CD8-positive, alpha-beta T cell (primary cell): ENCODE measurements at regions of chr5 and their contacts with region 1.

Region 1: DNA sequence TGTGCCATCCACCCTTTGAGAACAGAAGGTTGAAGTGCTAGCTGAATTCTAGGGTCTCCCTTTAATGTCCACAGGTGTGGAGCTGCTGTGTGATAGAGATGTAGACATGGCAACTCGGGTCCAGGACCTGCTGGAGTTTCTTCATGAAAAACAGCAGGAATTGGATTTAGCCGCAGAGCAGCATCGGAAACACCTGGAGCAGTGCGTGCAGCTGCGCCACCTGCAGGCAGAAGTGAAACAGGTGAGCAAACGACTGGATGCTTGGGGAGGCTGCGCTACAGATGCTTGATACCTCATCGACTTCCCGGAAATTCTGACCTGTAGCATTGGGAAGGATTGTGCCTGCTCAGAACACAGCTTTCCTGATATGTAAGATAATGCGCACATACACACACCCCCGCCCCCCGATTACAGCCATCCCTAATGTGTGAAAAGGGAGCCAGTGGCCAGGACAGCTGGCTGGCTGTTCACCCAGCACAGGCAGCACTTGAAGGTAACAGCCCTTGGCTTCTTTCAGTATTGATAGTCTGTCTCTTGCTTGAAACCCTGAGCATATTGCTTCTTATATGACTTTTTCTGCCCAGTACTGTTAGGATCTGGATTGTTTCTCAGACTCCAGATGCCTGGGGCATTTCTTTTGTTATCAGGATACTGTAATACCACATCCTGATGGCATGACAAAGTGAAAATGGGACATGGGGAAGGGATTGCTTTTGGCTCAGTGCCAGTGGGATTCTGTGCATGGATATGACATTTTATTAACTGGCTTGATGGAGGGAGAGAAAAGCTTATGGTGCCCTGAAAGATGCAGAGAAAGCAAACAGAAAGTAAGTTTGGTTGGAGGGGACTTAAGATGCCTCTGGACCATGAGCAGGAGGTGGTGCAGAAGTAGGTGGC is 216.8 kb upstream of the OTULINL start:
- DNase-seq: peak in 3 of 9 experiments; percentile 12 to 34 (median 25)
- ATAC-seq: no peak
- H3K4me3 ChIP-seq: no peak overlapping the region
- H3K4me3 Mint-ChIP-seq: no peak overlapping the region
- H3K27ac ChIP-seq: no peak overlapping the region
- H3K27ac Mint-ChIP-seq: no peak overlapping the region
- H3K4me1 ChIP-seq: peaks cover 33% of the 10 kb centered on the region
- H3K4me1 Mint-ChIP-seq: peaks cover 42% of the 10 kb centered on the region
- H3K27me3 ChIP-seq: no peaks in the 10 kb centered on the region
- H3K27me3 Mint-ChIP-seq: no peaks in the 10 kb centered on the region
- CTCF ChIP-seq: peak; percentile 6

Region 2: GRCh38 chr5:14351845-14352712 is 12.7 kb before region 1 on chr5:
- CTCF ChIA-PET with region 1: interaction called, 15 read pairs
- POLR2A ChIA-PET with region 1: no interaction called
- intact Hi-C with region 1: no loop called
- DNase-seq: peak; percentile 26 to 76 (median 59)
- ATAC-seq: peak; percentile 95
- H3K4me3 ChIP-seq: no peak overlapping the region
- H3K4me3 Mint-ChIP-seq: no peak overlapping the region
- H3K27ac ChIP-seq: no peak overlapping the region
- H3K27ac Mint-ChIP-seq: no peak overlapping the region
- H3K4me1 ChIP-seq: no peaks in the 10 kb centered on the region
- H3K4me1 Mint-ChIP-seq: no peaks in the 10 kb centered on the region
- H3K27me3 ChIP-seq: no peaks in the 10 kb centered on the region
- H3K27me3 Mint-ChIP-seq: peaks cover 3% of the 10 kb centered on the region
- CTCF ChIP-seq: peak; percentile 87

Region 3: GRCh38 chr5:14399054-14399692 is 34.3 kb after region 1 on chr5:
- CTCF ChIA-PET with region 1: interaction called, 19 read pairs
- POLR2A ChIA-PET with region 1: no interaction called
- intact Hi-C with region 1: loop called in 1 of 2 experiments (anchors 2 kb)
- DNase-seq: peak in 3 of 9 experiments; percentile 37 to 72 (median 58)
- ATAC-seq: peak; percentile 65
- H3K4me3 ChIP-seq: no peak overlapping the region
- H3K4me3 Mint-ChIP-seq: no peak overlapping the region
- H3K27ac ChIP-seq: no peak overlapping the region
- H3K27ac Mint-ChIP-seq: no peak overlapping the region
- H3K4me1 ChIP-seq: no peaks in the 10 kb centered on the region
- H3K4me1 Mint-ChIP-seq: peaks cover 13% of the 10 kb centered on the region
- H3K27me3 ChIP-seq: no peaks in the 10 kb centered on the region
- H3K27me3 Mint-ChIP-seq: no peaks in the 10 kb centered on the region
- CTCF ChIP-seq: peak; percentile 71

Region 4: GRCh38 chr5:14650052-14650451 is 285.2 kb after region 1 on chr5:
- CTCF ChIA-PET with region 1: interaction called, 283 read pairs
- POLR2A ChIA-PET with region 1: interaction called, 4 read pairs
- intact Hi-C with region 1: loop called (anchors 1 kb)
- DNase-seq: no peak
- ATAC-seq: no peak
- H3K4me3 ChIP-seq: no peak overlapping the region
- H3K4me3 Mint-ChIP-seq: no peak overlapping the region
- H3K27ac ChIP-seq: no peak overlapping the region
- H3K27ac Mint-ChIP-seq: no peak overlapping the region
- H3K4me1 ChIP-seq: peaks cover 4% of the 10 kb centered on the region
- H3K4me1 Mint-ChIP-seq: peaks cover under 1% of the 10 kb centered on the region
- H3K27me3 ChIP-seq: no peaks in the 10 kb centered on the region
- H3K27me3 Mint-ChIP-seq: peaks cover 7% of the 10 kb centered on the region
- CTCF ChIP-seq: no peak

Region 5: GRCh38 chr5:14655146-14655741 is 290.4 kb after region 1 on chr5:
- CTCF ChIA-PET with region 1: interaction called, 283 read pairs
- POLR2A ChIA-PET with region 1: interaction called, 4 read pairs
- intact Hi-C with region 1: no loop called
- DNase-seq: no peak
- ATAC-seq: peak; percentile 26
- H3K4me3 ChIP-seq: no peak overlapping the region
- H3K4me3 Mint-ChIP-seq: no peak overlapping the region
- H3K27ac ChIP-seq: no peak overlapping the region
- H3K27ac Mint-ChIP-seq: no peak overlapping the region
- H3K4me1 ChIP-seq: no peaks in the 10 kb centered on the region
- H3K4me1 Mint-ChIP-seq: peaks cover 14% of the 10 kb centered on the region
- H3K27me3 ChIP-seq: no peaks in the 10 kb centered on the region
- H3K27me3 Mint-ChIP-seq: no peaks in the 10 kb centered on the region
- CTCF ChIP-seq: no peak

Region 6: DNA sequence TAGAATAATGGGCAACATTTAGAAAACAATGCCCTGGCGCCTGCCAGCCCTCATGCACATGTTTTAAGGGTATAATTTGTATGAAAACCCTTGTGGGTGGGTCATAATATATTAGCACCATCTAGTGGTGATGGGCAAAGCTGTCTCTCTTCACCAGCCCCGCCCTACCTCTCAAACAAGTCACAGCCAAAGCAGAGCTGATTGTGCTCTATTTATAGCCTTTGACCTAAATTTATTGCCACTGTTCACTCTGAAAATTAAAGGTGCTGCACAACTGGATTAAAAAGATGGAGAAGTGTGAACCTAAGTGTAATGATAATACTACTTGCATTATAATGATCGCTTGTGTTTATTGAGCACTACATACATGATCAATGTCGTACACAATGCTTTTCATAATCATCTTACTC is 638.7 kb after region 1 on chr5:
- CTCF ChIA-PET with region 1: no interaction called
- POLR2A ChIA-PET with region 1: no interaction called
- intact Hi-C with region 1: loop called in 1 of 2 experiments (anchors 5 kb)
- DNase-seq: peak; percentile 24 to 82 (median 53)
- ATAC-seq: peak; percentile 99
- H3K4me3 ChIP-seq: no peak overlapping the region
- H3K4me3 Mint-ChIP-seq: no peak overlapping the region
- H3K27ac ChIP-seq: no peak overlapping the region
- H3K27ac Mint-ChIP-seq: no peak overlapping the region
- H3K4me1 ChIP-seq: no peaks in the 10 kb centered on the region
- H3K4me1 Mint-ChIP-seq: no peaks in the 10 kb centered on the region
- H3K27me3 ChIP-seq: no peaks in the 10 kb centered on the region
- H3K27me3 Mint-ChIP-seq: peaks cover 5% of the 10 kb centered on the region
- CTCF ChIP-seq: peak; percentile 78

Region 7: DNA sequence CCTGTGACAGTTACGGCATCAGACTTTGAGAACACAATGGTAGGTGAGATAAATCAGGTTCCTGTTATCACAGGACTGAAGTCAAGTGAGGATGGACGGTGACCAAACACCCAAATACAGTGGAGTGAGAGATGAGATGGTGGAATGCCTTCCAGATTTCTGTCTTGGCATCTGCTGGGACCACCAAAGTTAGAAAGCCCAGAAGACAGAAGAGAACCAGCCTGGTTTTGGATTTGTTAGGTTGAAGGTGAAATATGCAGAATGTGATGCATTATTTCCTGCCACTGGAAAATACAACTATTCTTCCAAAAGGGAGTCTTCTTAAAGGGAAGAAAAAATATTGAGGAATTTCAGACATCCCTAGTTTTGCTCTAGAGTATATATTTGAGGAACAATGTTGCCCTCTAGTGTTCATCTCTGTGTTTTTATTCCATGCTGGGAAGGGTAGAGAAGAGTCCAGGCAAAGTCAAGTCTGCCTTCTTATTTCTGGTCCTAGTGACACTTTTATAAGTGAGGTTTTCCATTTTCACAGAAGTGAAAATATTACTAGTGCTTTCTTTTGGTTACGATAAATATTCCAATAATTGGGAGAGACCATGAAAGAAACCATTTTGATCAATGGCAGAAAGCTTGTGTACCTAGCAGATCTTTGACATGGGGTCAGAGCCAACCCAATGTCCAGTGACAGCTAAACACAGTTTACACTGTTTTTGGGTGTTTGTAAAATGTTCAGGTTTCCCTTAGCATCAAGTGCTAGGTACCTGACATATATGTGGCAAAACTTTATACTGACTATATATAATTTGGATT is 649.0 kb after region 1 on chr5:
- CTCF ChIA-PET with region 1: no interaction called
- POLR2A ChIA-PET with region 1: no interaction called
- intact Hi-C with region 1: loop called in 1 of 2 experiments (anchors 5 kb)
- DNase-seq: peak in 2 of 9 experiments; percentile 44 to 59
- ATAC-seq: peak; percentile 44
- H3K4me3 ChIP-seq: no peak overlapping the region
- H3K4me3 Mint-ChIP-seq: no peak overlapping the region
- H3K27ac ChIP-seq: no peak overlapping the region
- H3K27ac Mint-ChIP-seq: no peak overlapping the region
- H3K4me1 ChIP-seq: no peaks in the 10 kb centered on the region
- H3K4me1 Mint-ChIP-seq: no peaks in the 10 kb centered on the region
- H3K27me3 ChIP-seq: no peaks in the 10 kb centered on the region
- H3K27me3 Mint-ChIP-seq: peaks cover 3% of the 10 kb centered on the region
- CTCF ChIP-seq: peak; percentile 74